ENCODE measurements at regions of chr2 and their contacts with region 1.

Region 1: DNA sequence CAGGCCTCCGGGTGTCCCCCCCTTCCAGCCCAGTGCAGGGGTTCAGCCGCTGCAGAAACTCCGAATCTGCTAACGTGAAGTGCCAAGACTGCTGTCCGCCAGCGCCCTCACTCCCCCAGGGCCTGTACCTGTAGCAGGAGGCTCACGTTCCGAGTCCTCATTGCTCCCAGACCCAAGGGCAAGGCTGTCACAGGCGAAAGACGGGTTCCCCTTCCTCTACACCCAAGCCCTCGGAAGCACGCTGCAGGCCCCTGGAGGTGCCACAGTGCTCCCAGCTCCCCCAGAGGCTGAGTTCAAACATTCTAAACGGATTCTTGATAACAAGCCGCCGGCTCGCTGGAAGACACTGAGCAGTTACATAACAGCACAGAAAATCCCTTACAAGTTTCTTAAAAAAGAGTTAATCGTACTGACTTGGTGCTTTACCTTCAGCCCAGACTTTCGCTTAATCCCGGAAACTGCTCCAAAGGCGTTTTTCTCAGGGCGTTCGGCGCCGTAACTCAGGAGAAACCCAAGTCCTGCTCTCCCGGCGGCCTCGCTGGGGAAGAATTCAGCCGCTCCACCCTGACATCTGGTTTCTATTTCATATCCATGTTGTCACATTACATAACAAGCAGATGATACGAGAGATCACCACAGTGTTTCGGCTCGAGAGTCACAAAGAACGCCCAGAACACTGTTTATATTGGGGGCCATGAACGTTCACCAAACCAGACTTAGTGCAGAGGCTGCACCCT is 92.0 kb downstream of the HDAC4 start:
- DNase-seq: peak; percentile 73 to 83
- ATAC-seq: peak; percentile 13 to 42
- H3K4me3 ChIP-seq: peak overlapping the region; percentile 63 to 71 (median 69)
- H3K27ac ChIP-seq: peak overlapping the region; percentile 94 to 99 (median 98)
- H3K4me1 ChIP-seq: peaks cover 71 to 72% of the 10 kb centered on the region in 2 donors
- H3K27me3 ChIP-seq: no peaks in the 10 kb centered on the region
- CTCF ChIP-seq: peak in 2 of 5 experiments; percentile 10 to 29
- POLR2A ChIP-seq: peak; percentile 78 to 94

Region 2: DNA sequence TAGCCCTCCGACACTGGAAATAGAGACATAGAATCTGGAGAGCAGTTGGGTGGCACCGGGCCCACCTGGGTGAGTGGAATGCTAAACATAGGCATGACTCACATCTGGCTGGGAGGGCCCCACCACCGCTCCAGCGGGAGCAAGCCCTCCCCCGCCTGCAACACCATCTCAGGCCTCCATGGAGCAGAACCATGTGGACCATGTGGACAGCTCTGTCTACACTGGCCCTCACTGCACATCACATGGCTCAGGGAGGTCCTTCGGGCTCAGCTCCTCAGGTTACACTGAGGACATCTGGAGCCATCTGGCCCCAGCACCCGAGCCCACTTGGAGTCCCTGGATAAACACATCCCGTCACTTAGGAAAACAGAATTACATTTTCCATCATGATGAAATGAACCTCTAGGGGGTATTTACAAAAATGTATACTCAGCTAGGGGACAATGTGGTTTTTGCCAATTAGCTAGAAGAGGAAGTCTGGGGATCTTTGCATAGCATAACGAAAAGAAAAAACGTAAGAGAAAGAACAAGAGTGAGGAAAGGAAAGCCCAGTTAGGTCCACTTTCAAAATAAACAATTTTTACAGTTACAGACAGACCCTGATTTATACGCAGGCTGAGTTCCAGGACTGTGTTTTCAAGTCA is 1852.5 kb before region 1 on chr2:
- in situ Hi-C with region 1: no loop called
- intact Hi-C with region 1: loop called (anchors 5 kb)
- DNase-seq: peak; percentile 92 to 98
- ATAC-seq: peak; percentile 84 to 87
- H3K4me3 ChIP-seq: no peak overlapping the region
- H3K27ac ChIP-seq: peak overlapping the region; percentile 71 to 85 (median 81)
- H3K4me1 ChIP-seq: peaks cover 26 to 38% of the 10 kb centered on the region in 2 donors
- H3K27me3 ChIP-seq: no peaks in the 10 kb centered on the region
- CTCF ChIP-seq: no peak
- POLR2A ChIP-seq: no peak

Region 3: GRCh38 chr2:239166201-239166834 is 142.5 kb before region 1 on chr2:
- in situ Hi-C with region 1: no loop called
- intact Hi-C with region 1: no loop called
- DNase-seq: no peak
- ATAC-seq: no peak
- H3K4me3 ChIP-seq: no peak overlapping the region
- H3K27ac ChIP-seq: peak overlapping the region; percentile 18 to 56 (median 27)
- H3K4me1 ChIP-seq: peaks cover 0 to 7% of the 10 kb centered on the region in 2 donors
- H3K27me3 ChIP-seq: no peaks in the 10 kb centered on the region
- CTCF ChIP-seq: no peak
- POLR2A ChIP-seq: no peak

Region 4: DNA sequence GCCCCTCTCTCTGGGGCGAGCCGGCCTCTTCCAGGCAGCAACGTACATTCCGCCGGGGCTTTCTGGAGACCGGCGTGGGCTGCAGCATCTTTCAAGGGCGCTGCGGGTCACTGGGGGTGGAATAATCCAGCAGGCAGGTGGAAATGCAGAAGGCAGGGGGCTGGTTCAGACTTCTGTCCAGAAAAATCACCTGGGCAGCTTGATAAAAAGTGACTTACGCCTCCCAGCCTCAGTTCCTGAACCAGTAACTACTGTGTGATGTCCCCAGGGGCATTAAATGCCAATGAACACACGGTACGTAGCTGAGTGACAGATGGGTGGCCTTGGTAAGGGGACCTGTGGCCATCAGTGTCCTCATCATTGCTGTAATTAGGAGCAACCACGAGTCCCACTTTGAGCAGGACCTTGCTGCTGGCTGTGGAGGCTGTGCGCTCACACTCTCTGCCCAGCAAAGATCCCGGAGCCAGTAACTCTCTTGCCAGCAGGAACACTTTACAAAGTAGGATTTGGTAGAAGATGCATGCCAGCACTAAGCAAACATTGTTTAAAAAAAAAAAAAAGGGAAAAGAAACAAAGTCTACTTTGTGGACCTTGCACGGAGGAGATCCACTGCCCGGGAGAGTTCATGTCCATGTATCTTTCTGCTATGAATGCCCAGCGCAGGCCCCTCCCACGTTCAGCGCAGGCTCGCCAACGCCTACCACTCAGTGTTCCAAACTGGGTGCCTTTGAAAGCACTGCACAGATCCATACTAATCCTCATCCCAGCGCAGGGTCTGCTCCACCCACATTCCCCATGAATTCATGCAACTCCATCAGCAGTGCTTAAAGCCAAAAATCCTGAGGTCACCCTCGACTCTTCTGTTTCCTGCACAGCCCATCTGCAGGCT is 85.3 kb before region 1 on chr2:
- in situ Hi-C with region 1: loop called in 1 of 4 experiments (anchors 10 kb)
- intact Hi-C with region 1: loop called (anchors 5 kb)
- DNase-seq: no peak
- ATAC-seq: peak; percentile 10 to 15
- H3K4me3 ChIP-seq: no peak overlapping the region
- H3K27ac ChIP-seq: peak overlapping the region; percentile 86 to 99 (median 93)
- H3K4me1 ChIP-seq: peaks cover 89 to 90% of the 10 kb centered on the region in 2 donors
- H3K27me3 ChIP-seq: no peaks in the 10 kb centered on the region
- CTCF ChIP-seq: no peak
- POLR2A ChIP-seq: no peak

Region 5: GRCh38 chr2:239249776-239250175 is 59.1 kb before region 1 on chr2:
- in situ Hi-C with region 1: no loop called
- intact Hi-C with region 1: loop called (anchors 2 kb)
- DNase-seq: peak in 1 of 2 donors; percentile 52
- ATAC-seq: no peak
- H3K4me3 ChIP-seq: no peak overlapping the region
- H3K27ac ChIP-seq: peak overlapping the region; percentile 94 to 99 (median 98)
- H3K4me1 ChIP-seq: peaks cover 94 to 95% of the 10 kb centered on the region in 2 donors
- H3K27me3 ChIP-seq: no peaks in the 10 kb centered on the region
- CTCF ChIP-seq: no peak
- POLR2A ChIP-seq: peak; percentile 13 to 15

Region 6: GRCh38 chr2:239275044-239275685 is 33.7 kb before region 1 on chr2:
- in situ Hi-C with region 1: no loop called
- intact Hi-C with region 1: loop called (anchors 2 kb)
- DNase-seq: peak; percentile 92 to 96
- ATAC-seq: peak; percentile 68 to 75
- H3K4me3 ChIP-seq: peak overlapping the region; percentile 22 to 46 (median 40)
- H3K27ac ChIP-seq: peak overlapping the region; percentile 94 to 99 (median 98)
- H3K4me1 ChIP-seq: peaks cover 97 to 98% of the 10 kb centered on the region in 2 donors
- H3K27me3 ChIP-seq: no peaks in the 10 kb centered on the region
- CTCF ChIP-seq: peak in 3 of 5 experiments; percentile 8 to 58 (median 25)
- POLR2A ChIP-seq: peak; percentile 58 to 76

Region 7: GRCh38 chr2:239328351-239329191 is 19.7 kb after region 1 on chr2:
- in situ Hi-C with region 1: no loop called
- intact Hi-C with region 1: loop called (anchors 2 kb)
- DNase-seq: peak; percentile 81 to 93
- ATAC-seq: peak; percentile 49 to 55
- H3K4me3 ChIP-seq: peak overlapping the region in 3 of 4 donors; percentile 11 to 36 (median 26)
- H3K27ac ChIP-seq: peak overlapping the region; percentile 96 to 99 (median 98)
- H3K4me1 ChIP-seq: peaks cover 45 to 58% of the 10 kb centered on the region in 2 donors
- H3K27me3 ChIP-seq: no peaks in the 10 kb centered on the region
- CTCF ChIP-seq: peak in 1 of 5 experiments; percentile 11
- POLR2A ChIP-seq: peak; percentile 91 to 94